Mammary epithelial cell (primary cell): ENCODE measurements at regions of chr9 and their contacts with region 1.

Region 1: DNA sequence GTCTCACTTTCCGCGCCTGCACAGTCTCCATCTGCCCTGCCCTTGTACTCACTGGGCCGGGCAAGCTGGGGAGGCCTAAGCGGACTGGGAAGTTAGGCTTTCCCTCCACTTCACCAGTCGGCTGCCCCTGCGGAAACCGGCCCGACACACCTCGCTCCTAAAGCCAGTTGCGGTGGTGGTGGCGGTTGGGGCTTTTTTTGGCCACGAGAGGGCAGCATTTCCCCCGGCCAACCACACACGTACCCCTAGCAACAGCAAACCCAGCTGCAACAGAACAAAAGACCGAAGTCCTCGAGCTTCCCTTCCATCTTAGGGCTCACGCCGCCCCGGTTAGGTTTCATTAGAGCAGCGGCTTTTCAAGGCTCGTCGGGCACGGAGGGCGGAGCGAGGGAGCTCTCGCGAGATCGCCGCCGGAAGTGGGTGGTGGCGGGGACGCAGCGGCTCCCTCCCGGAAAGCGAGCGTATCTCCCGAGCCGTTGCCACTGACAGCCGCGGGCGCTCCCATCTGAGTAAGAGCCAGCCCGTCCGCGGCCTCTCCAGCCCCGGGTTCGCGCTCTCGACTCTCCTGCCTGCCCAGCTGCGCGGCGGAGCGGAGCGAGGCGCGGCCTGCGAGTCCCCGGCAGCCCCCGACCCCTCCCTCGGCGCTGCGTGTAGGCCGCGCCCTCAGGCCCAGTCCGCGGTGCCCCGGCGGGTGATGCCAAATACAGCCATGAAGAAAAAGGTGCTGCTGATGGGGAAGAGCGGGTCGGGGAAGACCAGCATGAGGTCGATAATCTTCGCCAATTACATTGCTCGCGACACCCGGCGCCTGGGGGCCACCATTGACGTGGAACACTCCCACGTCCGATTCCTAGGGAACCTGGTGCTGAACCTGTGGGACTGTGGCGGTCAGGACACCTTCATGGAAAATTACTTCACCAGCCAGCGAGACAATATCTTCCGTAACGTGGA is at the start of gene RRAGA:
- DNase-seq: peak; percentile 97
- H3K4me3 ChIP-seq: peak within 1 kb of the TSS; percentile 55 to 68 (median 67)
- H3K27ac ChIP-seq: peak within 1 kb of the TSS; percentile 82
- H3K4me1 ChIP-seq: peaks cover 9% of the 10 kb centered on the region
- H3K27me3 ChIP-seq: no peaks in the 10 kb centered on the region
- CTCF ChIP-seq: peak; percentile 67 to 87
- total RNA-seq, gene RRAGA: 57.3 to 87.5 TPM

Region 2: GRCh38 chr9:17810728-17811571 is 1238.3 kb before region 1 on chr9:
- CTCF ChIA-PET with region 1: no interaction called
- dilution Hi-C with region 1: no loop called
- in situ Hi-C with region 1: loop called (anchors 25 kb)
- intact Hi-C with region 1: no loop called
- DNase-seq: peak; percentile 28
- H3K4me3 ChIP-seq: no peak overlapping the region
- H3K27ac ChIP-seq: no peak overlapping the region
- H3K4me1 ChIP-seq: no peaks in the 10 kb centered on the region
- H3K27me3 ChIP-seq: peaks cover 1% of the 10 kb centered on the region
- CTCF ChIP-seq: peak; percentile 72 to 85

Region 3: GRCh38 chr9:18442629-18443491 is 606.4 kb before region 1 on chr9:
- CTCF ChIA-PET with region 1: no interaction called
- dilution Hi-C with region 1: no loop called
- in situ Hi-C with region 1: loop called in 1 of 2 experiments (anchors 25 kb)
- intact Hi-C with region 1: no loop called
- DNase-seq: peak; percentile 64
- H3K4me3 ChIP-seq: no peak overlapping the region
- H3K27ac ChIP-seq: no peak overlapping the region
- H3K4me1 ChIP-seq: peaks cover 14% of the 10 kb centered on the region
- H3K27me3 ChIP-seq: no peaks in the 10 kb centered on the region
- CTCF ChIP-seq: peak; percentile 92 to 96

Region 4: DNA sequence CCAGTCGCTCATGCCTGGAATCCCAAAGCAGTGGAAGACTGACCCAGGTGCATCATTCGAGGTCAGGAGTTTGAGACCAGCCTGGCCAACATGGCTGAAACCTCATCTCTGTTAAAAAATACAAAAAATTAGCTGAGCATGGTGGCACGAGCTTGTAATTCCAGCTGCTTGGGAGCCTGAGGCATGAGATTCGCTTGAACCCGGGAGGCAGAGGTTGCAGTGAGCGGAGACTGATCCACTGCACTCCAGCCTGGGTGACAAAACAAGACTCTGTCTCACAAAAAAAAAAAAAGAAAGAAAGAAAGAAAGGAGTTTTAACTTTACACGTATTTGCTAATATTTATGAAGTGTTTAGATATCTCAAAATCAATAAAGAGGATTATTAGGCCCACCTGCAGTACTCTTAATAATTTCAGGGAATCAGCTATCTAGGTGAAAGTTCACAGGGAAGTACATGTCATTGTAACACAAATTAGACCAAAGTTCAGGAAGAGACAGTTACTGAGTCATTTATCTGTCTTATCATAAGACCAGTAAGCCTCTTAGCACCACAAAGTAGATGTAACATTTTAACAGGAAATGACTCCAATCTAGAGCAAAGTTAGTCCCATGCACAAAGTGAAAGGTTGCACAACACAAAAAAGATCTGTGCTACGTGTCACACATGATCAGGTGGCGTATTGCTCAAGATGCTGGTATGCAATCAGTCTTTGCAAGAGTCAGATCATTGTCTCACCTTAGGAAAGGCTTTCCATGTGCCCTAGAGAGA is 112.2 kb after region 1 on chr9:
- CTCF ChIA-PET with region 1: no interaction called
- dilution Hi-C with region 1: no loop called
- in situ Hi-C with region 1: no loop called
- intact Hi-C with region 1: loop called (anchors 1 kb)
- DNase-seq: peak; percentile 98
- H3K4me3 ChIP-seq: no peak overlapping the region
- H3K27ac ChIP-seq: peak overlapping the region; percentile 58
- H3K4me1 ChIP-seq: peaks cover 16% of the 10 kb centered on the region
- H3K27me3 ChIP-seq: no peaks in the 10 kb centered on the region
- CTCF ChIP-seq: no peak

Region 5: GRCh38 chr9:19230356-19231125 is 181.3 kb after region 1 on chr9 and contains the start of gene DENND4C:
- CTCF ChIA-PET with region 1: no interaction called
- dilution Hi-C with region 1: no loop called
- in situ Hi-C with region 1: no loop called
- intact Hi-C with region 1: loop called (anchors 1 kb)
- DNase-seq: peak; percentile 85
- H3K4me3 ChIP-seq: peak within 1 kb of the TSS; percentile 74 to 100 (median 94)
- H3K27ac ChIP-seq: peak within 1 kb of the TSS; percentile 91
- H3K4me1 ChIP-seq: peaks cover 9% of the 10 kb centered on the region
- H3K27me3 ChIP-seq: no peaks in the 10 kb centered on the region
- CTCF ChIP-seq: no peak
- total RNA-seq, gene DENND4C: 28.5 to 65.0 TPM

Region 6: DNA sequence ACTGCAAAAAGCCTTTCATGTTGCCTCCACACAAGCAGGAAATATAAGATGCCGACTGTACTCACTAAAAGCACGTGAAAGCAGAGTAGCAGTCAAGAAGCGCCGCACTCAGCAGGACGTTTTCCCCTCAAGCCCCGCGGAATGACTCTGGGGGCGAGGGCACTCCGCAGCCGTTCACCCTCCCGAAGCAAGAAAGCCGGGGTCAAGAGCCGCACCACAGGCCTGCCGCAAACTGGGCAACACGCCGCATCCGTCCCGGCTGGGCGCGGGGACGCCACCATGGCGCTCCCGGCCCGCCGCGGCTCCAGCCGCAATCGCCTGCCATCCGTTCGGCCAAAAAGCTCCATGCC is 330.4 kb after region 1 on chr9:
- CTCF ChIA-PET with region 1: no interaction called
- dilution Hi-C with region 1: no loop called
- in situ Hi-C with region 1: loop called in 1 of 2 experiments (anchors 25 kb)
- intact Hi-C with region 1: loop called (anchors 5 kb)
- DNase-seq: no peak
- H3K4me3 ChIP-seq: peak overlapping the region; percentile 59 to 72 (median 60)
- H3K27ac ChIP-seq: peak overlapping the region; percentile 77
- H3K4me1 ChIP-seq: peaks cover 15% of the 10 kb centered on the region
- H3K27me3 ChIP-seq: no peaks in the 10 kb centered on the region
- CTCF ChIP-seq: no peak

Region 7: DNA sequence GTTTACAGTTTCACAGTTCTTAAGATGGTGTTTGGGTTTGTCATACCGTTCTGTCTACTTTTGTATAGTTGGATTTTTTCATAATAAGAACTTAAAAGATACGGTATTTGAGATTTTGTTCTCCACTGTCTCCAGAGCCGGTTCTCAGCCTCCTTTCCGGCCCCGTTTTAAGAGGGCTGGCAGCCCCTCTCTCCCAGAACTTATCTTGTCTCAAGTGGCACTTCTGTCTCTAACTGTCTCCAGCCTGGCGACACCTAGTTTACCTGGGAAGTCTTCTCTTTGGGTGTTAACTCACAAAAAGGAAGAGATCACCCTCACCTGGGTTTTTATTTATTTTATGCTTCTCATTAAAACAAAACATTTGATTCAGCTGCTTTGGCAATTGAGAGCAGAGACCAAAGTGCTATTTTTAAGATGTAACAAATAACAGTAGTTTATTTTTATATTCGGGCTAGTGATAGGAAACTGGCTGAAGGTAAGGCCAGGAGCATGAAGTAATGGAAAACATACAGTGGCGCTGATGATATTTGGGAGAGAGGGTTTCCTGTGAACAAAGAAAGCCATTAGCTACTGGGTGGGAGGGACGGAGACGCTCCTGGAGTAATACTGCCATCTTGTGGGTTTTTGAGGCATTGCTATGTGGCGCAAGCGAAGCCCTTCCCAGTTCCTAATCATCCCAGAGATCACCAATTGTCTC is 407.9 kb after region 1 on chr9:
- CTCF ChIA-PET with region 1: interaction called, 3 read pairs
- dilution Hi-C with region 1: no loop called
- in situ Hi-C with region 1: no loop called
- intact Hi-C with region 1: loop called (anchors 1 kb)
- DNase-seq: peak; percentile 65
- H3K4me3 ChIP-seq: no peak overlapping the region
- H3K27ac ChIP-seq: no peak overlapping the region
- H3K4me1 ChIP-seq: no peaks in the 10 kb centered on the region
- H3K27me3 ChIP-seq: no peaks in the 10 kb centered on the region
- CTCF ChIP-seq: peak; percentile 94 to 95